ENCODE measurements at regions of chr2 and their contacts with region 1.

Region 1: DNA sequence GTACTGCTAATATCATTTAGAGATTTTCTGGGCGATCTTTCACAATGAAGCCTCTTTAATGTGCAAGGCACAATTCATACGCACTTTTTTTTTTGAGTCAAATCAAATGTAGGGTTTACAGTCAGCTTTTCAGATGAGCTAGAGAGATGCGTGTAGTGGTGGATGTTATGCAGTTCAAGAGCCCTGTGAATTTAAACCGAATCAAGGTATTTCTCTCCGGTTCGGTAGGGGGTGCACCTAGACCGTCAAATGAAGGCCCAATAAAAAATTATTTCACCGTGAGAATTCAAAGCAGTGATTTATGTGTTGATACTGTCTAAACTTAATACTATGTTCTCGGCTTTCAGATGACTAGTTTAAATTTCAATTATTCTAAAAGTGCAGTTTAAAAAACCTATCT is 1.1 kb downstream of the PTH2R start:
- DNase-seq: peak; percentile 64
- H3K4me3 Mint-ChIP-seq: peak overlapping the region; percentile 73
- H3K27ac Mint-ChIP-seq: no peak overlapping the region
- H3K4me1 Mint-ChIP-seq: peaks cover 10% of the 10 kb centered on the region
- H3K27me3 Mint-ChIP-seq: no peaks in the 10 kb centered on the region
- CTCF ChIP-seq: peak; percentile 67

Region 2: DNA sequence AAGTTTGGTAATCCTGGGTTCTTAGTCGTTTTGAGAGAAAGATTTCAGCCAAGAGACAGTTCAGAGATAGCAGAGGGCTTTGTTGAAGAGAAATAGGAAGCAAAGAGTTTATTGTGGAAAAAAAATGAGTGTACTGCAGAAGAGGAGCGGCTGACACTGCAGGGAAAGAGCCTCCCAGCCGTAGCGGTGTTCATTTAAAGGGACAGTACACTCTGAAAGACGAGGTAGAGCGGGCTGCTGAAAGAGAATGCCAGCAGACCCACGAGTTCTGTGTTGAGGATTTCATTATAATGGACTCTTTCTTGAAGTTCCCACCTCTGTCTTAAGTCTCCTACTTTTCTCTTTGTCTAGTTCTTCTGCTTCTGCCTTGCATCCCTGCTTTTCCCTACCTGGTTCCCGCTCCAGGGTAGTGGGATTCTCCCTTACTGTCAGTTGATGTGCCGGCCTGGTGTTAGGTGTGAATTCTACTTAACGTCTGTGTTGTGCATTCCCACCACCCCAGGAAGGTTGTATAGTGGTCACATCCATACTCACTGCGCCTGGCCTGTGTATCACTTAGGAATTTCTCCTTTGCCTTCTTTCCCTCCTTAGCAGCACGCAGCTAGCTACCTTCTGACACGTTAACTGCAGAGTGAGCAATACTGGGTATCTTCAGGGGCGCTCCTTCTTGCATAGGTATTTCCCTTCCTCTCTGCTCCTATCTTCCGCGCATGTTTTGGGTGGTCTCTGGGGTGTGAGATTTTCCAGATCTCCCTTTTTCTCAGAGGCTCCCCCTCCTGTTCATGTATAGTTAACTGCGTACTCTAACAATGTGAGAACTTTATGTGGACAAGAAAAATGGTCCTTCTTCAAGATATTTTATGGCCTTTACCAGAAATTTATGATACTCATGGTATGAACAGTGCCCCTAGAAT is 163.4 kb after region 1 on chr2:
- CTCF ChIA-PET with region 1: no interaction called
- intact Hi-C with region 1: loop called (anchors 5 kb)
- DNase-seq: no peak
- H3K4me3 Mint-ChIP-seq: peak overlapping the region; percentile 43
- H3K27ac Mint-ChIP-seq: no peak overlapping the region
- H3K4me1 Mint-ChIP-seq: peaks cover 15% of the 10 kb centered on the region
- H3K27me3 Mint-ChIP-seq: peaks cover 14% of the 10 kb centered on the region
- CTCF ChIP-seq: no peak

Region 3: DNA sequence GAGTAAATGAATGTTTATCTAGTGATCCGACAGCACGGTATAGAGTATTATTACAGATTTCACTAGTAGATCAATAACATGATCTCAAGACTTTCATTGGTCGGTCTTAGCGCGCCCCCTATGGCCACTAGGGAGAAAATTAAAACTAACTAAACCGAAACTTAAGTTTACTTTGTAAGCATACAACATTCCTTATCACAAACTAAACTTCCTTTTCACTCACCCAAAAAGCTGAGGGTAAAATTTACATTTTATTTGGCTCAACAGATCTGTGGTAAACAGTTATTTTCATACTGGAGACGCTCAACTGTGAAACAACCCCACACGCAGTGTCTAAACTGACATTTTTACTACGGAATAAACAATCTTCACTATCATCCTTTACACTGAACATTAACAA is 800.5 kb after region 1 on chr2:
- CTCF ChIA-PET with region 1: no interaction called
- intact Hi-C with region 1: loop called (anchors 1 kb)
- DNase-seq: peak; percentile 63
- H3K4me3 Mint-ChIP-seq: peak overlapping the region; percentile 54
- H3K27ac Mint-ChIP-seq: peak overlapping the region; percentile 31
- H3K4me1 Mint-ChIP-seq: peaks cover 8% of the 10 kb centered on the region
- H3K27me3 Mint-ChIP-seq: no peaks in the 10 kb centered on the region
- CTCF ChIP-seq: peak; percentile 81

Region 4: GRCh38 chr2:209334198-209335017 is 926.7 kb after region 1 on chr2:
- CTCF ChIA-PET with region 1: interaction called, 17 read pairs
- intact Hi-C with region 1: loop called (anchors 1 kb)
- DNase-seq: peak; percentile 70
- H3K4me3 Mint-ChIP-seq: no peak overlapping the region
- H3K27ac Mint-ChIP-seq: no peak overlapping the region
- H3K4me1 Mint-ChIP-seq: no peaks in the 10 kb centered on the region
- H3K27me3 Mint-ChIP-seq: no peaks in the 10 kb centered on the region
- CTCF ChIP-seq: peak; percentile 82

Region 5: DNA sequence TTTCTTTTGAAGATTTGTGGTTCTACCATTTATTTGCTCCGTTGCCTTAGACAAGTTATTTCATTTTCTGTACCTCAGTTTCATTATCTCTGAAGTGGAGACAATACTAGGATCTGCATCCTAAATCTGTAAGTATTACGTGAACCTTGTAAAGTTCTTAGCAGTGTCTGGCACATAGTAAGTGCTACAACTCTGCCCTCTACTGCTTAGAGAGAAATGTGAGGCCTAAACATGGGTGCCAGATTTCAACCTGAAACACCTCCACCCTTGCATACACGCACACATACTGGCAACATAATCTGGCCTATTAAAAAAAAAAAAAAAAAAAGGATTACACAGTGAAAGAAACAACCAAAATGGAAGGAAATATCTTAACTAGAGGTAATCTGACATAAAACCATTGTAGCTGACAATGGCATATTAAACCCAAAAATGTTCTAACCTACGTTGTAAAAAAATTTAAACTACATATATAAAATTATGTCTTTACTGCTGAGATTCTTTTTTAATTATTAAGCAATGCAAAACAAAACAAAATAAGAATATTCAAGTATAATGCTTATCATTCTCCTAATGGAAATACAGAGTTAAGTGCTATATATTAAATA is 1148.8 kb after region 1 on chr2:
- CTCF ChIA-PET with region 1: no interaction called
- intact Hi-C with region 1: loop called (anchors 5 kb)
- DNase-seq: peak; percentile 22
- H3K4me3 Mint-ChIP-seq: no peak overlapping the region
- H3K27ac Mint-ChIP-seq: no peak overlapping the region
- H3K4me1 Mint-ChIP-seq: no peaks in the 10 kb centered on the region
- H3K27me3 Mint-ChIP-seq: no peaks in the 10 kb centered on the region
- CTCF ChIP-seq: peak; percentile 37

Measured in Calu3 (cell line).